ENCODE measurements at regions of chrX and their contacts with region 1.

Region 1: GRCh38 chrX:10119399-10119990 is 37.3 kb upstream of the CLCN4 start:
- DNase-seq: peak; percentile 83 to 87 (median 83)
- H3K4me3 ChIP-seq: no peak overlapping the region
- H3K4me3 Mint-ChIP-seq: no peak overlapping the region
- H3K27ac ChIP-seq: no peak overlapping the region
- H3K27ac Mint-ChIP-seq: peak overlapping the region in 2 of 7 donors; percentile 15 to 16
- H3K4me1 ChIP-seq: peaks cover 47 to 52% of the 10 kb centered on the region in 2 donors
- H3K4me1 Mint-ChIP-seq: peaks cover 48% of the 10 kb centered on the region
- H3K27me3 ChIP-seq: no peaks in the 10 kb centered on the region
- H3K27me3 Mint-ChIP-seq: peaks cover 0 to 3% (median 2%) of the 10 kb centered on the region in 3 donors
- CTCF ChIP-seq: peak; percentile 100

Region 2: GRCh38 chrX:8743126-8743732 is 1376.3 kb before region 1 on chrX:
- intact Hi-C with region 1: loop called in 1 of 2 experiments (anchors 10 kb)
- DNase-seq: peak; percentile 26 to 33 (median 27)
- H3K4me3 ChIP-seq: no peak overlapping the region
- H3K4me3 Mint-ChIP-seq: no peak overlapping the region
- H3K27ac ChIP-seq: no peak overlapping the region
- H3K27ac Mint-ChIP-seq: no peak overlapping the region
- H3K4me1 ChIP-seq: no peaks in the 10 kb centered on the region
- H3K4me1 Mint-ChIP-seq: no peaks in the 10 kb centered on the region
- H3K27me3 ChIP-seq: no peaks in the 10 kb centered on the region
- H3K27me3 Mint-ChIP-seq: peaks cover 8 to 15% (median 10%) of the 10 kb centered on the region in 3 donors
- CTCF ChIP-seq: peak; percentile 74

Region 3: GRCh38 chrX:9873952-9874351 is 245.5 kb before region 1 on chrX:
- intact Hi-C with region 1: loop called in 1 of 2 experiments (anchors 2 kb)
- DNase-seq: peak; percentile 30 to 50 (median 36)
- H3K4me3 ChIP-seq: no peak overlapping the region
- H3K4me3 Mint-ChIP-seq: peak overlapping the region in 1 of 2 donors; percentile 63
- H3K27ac ChIP-seq: no peak overlapping the region
- H3K27ac Mint-ChIP-seq: no peak overlapping the region
- H3K4me1 ChIP-seq: no peaks in the 10 kb centered on the region
- H3K4me1 Mint-ChIP-seq: peaks cover 2% of the 10 kb centered on the region
- H3K27me3 ChIP-seq: no peaks in the 10 kb centered on the region
- H3K27me3 Mint-ChIP-seq: peaks cover 8 to 12% (median 10%) of the 10 kb centered on the region in 3 donors
- CTCF ChIP-seq: peak; percentile 42

Region 4: GRCh38 chrX:9885150-9885549 is 234.3 kb before region 1 on chrX:
- intact Hi-C with region 1: loop called (anchors 5 kb)
- DNase-seq: peak; percentile 51 to 63 (median 56)
- H3K4me3 ChIP-seq: no peak overlapping the region
- H3K4me3 Mint-ChIP-seq: no peak overlapping the region
- H3K27ac ChIP-seq: no peak overlapping the region
- H3K27ac Mint-ChIP-seq: no peak overlapping the region
- H3K4me1 ChIP-seq: peaks cover 10 to 12% of the 10 kb centered on the region in 2 donors
- H3K4me1 Mint-ChIP-seq: peaks cover 9% of the 10 kb centered on the region
- H3K27me3 ChIP-seq: no peaks in the 10 kb centered on the region
- H3K27me3 Mint-ChIP-seq: peaks cover 3 to 8% (median 8%) of the 10 kb centered on the region in 3 donors
- CTCF ChIP-seq: peak; percentile 65

Region 5: DNA sequence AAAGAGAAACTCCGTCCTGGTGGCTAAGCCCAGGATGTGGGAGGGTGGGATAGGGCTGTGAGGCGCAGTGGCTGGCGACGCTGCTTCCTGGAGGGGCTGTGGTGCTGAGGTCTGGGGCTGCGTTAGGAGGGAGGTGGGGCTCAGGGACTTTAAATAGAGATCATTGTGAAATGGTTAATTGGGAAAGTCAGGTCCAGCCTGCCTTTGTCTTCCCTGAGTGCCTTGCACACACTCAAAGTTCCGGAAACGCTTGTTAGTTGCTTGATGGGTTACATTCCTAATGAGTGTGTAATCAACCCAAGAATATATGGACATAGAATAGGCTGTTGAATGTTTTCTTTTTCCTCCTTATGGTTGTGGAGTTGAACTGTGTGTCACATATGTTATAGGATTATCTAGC is 208.0 kb before region 1 on chrX:
- intact Hi-C with region 1: no loop called
- DNase-seq: no peak
- H3K4me3 ChIP-seq: no peak overlapping the region
- H3K4me3 Mint-ChIP-seq: no peak overlapping the region
- H3K27ac ChIP-seq: no peak overlapping the region
- H3K27ac Mint-ChIP-seq: no peak overlapping the region
- H3K4me1 ChIP-seq: peaks cover 6 to 8% of the 10 kb centered on the region in 2 donors
- H3K4me1 Mint-ChIP-seq: peaks cover 10% of the 10 kb centered on the region
- H3K27me3 ChIP-seq: peaks cover 0 to 7% of the 10 kb centered on the region in 2 donors
- H3K27me3 Mint-ChIP-seq: peaks cover 1 to 20% (median 19%) of the 10 kb centered on the region in 3 donors
- CTCF ChIP-seq: no peak

Region 6: GRCh38 chrX:9988762-9989161 is 130.7 kb before region 1 on chrX:
- intact Hi-C with region 1: loop called in 1 of 2 experiments (anchors 2 kb)
- DNase-seq: no peak
- H3K4me3 ChIP-seq: no peak overlapping the region
- H3K4me3 Mint-ChIP-seq: no peak overlapping the region
- H3K27ac ChIP-seq: no peak overlapping the region
- H3K27ac Mint-ChIP-seq: no peak overlapping the region
- H3K4me1 ChIP-seq: peaks cover 34 to 46% of the 10 kb centered on the region in 2 donors
- H3K4me1 Mint-ChIP-seq: peaks cover 31% of the 10 kb centered on the region
- H3K27me3 ChIP-seq: no peaks in the 10 kb centered on the region
- H3K27me3 Mint-ChIP-seq: peaks cover 0 to 6% (median 0%) of the 10 kb centered on the region in 3 donors
- CTCF ChIP-seq: peak; percentile 27

Region 7: GRCh38 chrX:9995855-9996339 is 123.6 kb before region 1 on chrX:
- intact Hi-C with region 1: loop called in 1 of 2 experiments (anchors 5 kb)
- DNase-seq: peak; percentile 60 to 70 (median 69)
- H3K4me3 ChIP-seq: no peak overlapping the region
- H3K4me3 Mint-ChIP-seq: no peak overlapping the region
- H3K27ac ChIP-seq: no peak overlapping the region
- H3K27ac Mint-ChIP-seq: no peak overlapping the region
- H3K4me1 ChIP-seq: no peaks in the 10 kb centered on the region
- H3K4me1 Mint-ChIP-seq: peaks cover 4% of the 10 kb centered on the region
- H3K27me3 ChIP-seq: no peaks in the 10 kb centered on the region
- H3K27me3 Mint-ChIP-seq: peaks cover 0 to 12% (median 0%) of the 10 kb centered on the region in 3 donors
- CTCF ChIP-seq: peak; percentile 90

Region 8: GRCh38 chrX:10166731-10167151 is 47.2 kb after region 1 on chrX:
- intact Hi-C with region 1: no loop called
- DNase-seq: peak; percentile 36 to 66 (median 61)
- H3K4me3 ChIP-seq: peak overlapping the region in 1 of 3 experiments; percentile 33
- H3K4me3 Mint-ChIP-seq: peak overlapping the region; percentile 54 to 81
- H3K27ac ChIP-seq: peak overlapping the region; percentile 80 to 86
- H3K27ac Mint-ChIP-seq: peak overlapping the region; percentile 87 to 97 (median 94)
- H3K4me1 ChIP-seq: peaks cover 65 to 66% of the 10 kb centered on the region in 2 donors
- H3K4me1 Mint-ChIP-seq: peaks cover 68% of the 10 kb centered on the region
- H3K27me3 ChIP-seq: no peaks in the 10 kb centered on the region
- H3K27me3 Mint-ChIP-seq: peaks cover 0 to 11% (median 0%) of the 10 kb centered on the region in 3 donors
- CTCF ChIP-seq: no peak